AG04450 (cell line): ENCODE measurements at regions of chr19 and their contacts with region 1.

Region 1: GRCh38 chr19:43446746-43447489 is 18.5 kb downstream of the LYPD3 start:
- DNase-seq: no peak
- H3K4me3 ChIP-seq: no peak overlapping the region
- H3K27ac ChIP-seq: no peak overlapping the region
- H3K27me3 ChIP-seq: no peaks in the 10 kb centered on the region
- CTCF ChIP-seq: peak; percentile 95

Region 2: DNA sequence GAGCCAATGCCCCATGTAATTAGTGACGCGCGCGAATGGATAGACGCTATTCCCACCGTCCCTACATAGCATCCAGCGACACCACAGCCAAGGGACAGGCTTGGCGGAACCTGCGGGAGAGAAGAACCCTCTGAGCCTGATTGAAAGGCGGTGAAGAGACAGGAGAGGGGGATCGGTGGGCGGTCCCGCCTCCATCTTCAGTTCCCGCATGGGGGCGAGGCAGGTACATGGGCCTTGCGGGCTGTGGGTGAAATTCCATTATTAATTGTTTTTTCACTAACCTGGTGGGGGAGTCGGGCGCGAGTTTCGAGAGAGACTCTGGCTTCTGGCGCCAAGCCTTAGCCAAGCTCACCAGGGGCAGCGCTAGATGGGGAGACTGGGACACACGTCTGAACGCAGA is 40.6 kb before region 1 on chr19:
- CTCF ChIA-PET with region 1: no interaction called
- POLR2A ChIA-PET with region 1: no interaction called
- DNase-seq: no peak
- H3K4me3 ChIP-seq: no peak overlapping the region
- H3K27ac ChIP-seq: no peak overlapping the region
- H3K27me3 ChIP-seq: peaks cover 9% of the 10 kb centered on the region
- CTCF ChIP-seq: no peak

Region 3: DNA sequence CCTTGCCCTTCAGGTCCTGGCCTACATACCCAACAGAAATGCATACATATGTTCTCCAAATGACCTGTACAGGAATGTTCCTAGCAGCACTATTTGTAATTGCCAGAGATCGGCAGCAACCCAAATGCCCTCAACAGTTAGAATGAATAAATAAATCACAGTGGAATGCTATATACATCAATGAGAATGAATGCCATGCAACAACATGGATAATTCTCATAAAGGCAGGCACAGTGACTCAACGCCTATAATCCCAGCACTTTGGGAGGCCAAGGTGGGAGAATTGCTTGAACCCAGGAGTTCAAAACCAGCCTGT is 13.6 kb before region 1 on chr19:
- CTCF ChIA-PET with region 1: interaction called, 18 read pairs
- POLR2A ChIA-PET with region 1: no interaction called
- DNase-seq: no peak
- H3K4me3 ChIP-seq: no peak overlapping the region
- H3K27ac ChIP-seq: no peak overlapping the region
- H3K27me3 ChIP-seq: no peaks in the 10 kb centered on the region
- CTCF ChIP-seq: no peak

Region 4: GRCh38 chr19:43463381-43464136 is 16.6 kb after region 1 on chr19:
- CTCF ChIA-PET with region 1: interaction called, 23 read pairs
- POLR2A ChIA-PET with region 1: no interaction called
- DNase-seq: peak; percentile 62
- H3K4me3 ChIP-seq: peak overlapping the region; percentile 79
- H3K27ac ChIP-seq: peak overlapping the region; percentile 47
- H3K27me3 ChIP-seq: peaks cover 7% of the 10 kb centered on the region
- CTCF ChIP-seq: no peak

Region 5: DNA sequence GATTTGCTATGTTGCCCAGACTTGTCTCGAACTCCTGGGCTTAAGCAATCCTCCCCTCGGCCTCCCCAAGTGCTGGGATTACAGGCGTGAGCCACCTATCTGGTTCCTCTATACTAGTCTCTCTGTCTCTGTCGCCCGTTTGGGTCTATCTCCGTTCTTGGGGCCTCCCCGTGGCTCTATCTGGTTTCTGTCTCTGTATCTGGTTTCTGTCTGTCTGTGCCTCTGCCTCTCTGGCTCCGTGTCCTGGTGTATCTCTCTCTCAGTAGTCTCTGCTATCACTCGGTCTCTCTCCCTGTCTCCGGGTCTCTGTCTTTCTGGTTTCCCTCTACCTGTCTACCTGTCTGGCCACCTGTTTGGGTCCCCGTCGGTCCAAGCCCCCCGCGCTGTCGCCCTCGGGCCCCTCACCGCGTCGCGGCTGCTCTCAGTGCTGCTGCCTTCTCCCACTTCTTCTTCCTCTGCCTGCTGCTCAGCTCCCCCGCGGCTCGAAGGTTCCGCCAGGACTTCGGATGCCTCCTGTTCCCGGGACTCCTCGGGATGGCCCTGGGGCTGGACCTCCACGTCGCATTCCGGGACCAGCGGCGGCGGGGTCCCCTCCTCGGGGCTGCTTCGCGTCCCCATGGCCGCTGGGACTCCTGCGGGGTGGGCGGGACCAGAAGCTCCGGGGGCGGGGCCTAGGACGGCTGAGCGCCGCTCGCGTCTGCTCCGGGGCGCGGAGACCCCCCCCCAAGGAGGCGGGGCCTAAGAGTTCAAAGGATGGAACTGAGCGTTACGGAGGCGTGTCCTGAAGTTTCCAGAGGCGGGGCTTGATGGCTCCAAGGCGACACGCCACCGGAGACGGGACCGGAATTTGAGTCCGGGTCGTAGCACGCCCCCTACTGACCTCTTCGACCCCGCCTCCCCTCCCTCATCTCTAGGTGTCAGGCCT is 56.8 kb after region 1 on chr19:
- CTCF ChIA-PET with region 1: interaction called, 15 read pairs
- POLR2A ChIA-PET with region 1: interaction called, 3 read pairs
- DNase-seq: peak; percentile 68
- H3K4me3 ChIP-seq: peak overlapping the region; percentile 91
- H3K27ac ChIP-seq: peak overlapping the region; percentile 68
- H3K27me3 ChIP-seq: no peaks in the 10 kb centered on the region
- CTCF ChIP-seq: no peak

Region 6: GRCh38 chr19:43519436-43520088 is 72.6 kb after region 1 on chr19:
- CTCF ChIA-PET with region 1: interaction called, 385 read pairs
- POLR2A ChIA-PET with region 1: interaction called, 13 read pairs
- DNase-seq: peak; percentile 94
- H3K4me3 ChIP-seq: no peak overlapping the region
- H3K27ac ChIP-seq: no peak overlapping the region
- H3K27me3 ChIP-seq: no peaks in the 10 kb centered on the region
- CTCF ChIP-seq: peak; percentile 89

Region 7: DNA sequence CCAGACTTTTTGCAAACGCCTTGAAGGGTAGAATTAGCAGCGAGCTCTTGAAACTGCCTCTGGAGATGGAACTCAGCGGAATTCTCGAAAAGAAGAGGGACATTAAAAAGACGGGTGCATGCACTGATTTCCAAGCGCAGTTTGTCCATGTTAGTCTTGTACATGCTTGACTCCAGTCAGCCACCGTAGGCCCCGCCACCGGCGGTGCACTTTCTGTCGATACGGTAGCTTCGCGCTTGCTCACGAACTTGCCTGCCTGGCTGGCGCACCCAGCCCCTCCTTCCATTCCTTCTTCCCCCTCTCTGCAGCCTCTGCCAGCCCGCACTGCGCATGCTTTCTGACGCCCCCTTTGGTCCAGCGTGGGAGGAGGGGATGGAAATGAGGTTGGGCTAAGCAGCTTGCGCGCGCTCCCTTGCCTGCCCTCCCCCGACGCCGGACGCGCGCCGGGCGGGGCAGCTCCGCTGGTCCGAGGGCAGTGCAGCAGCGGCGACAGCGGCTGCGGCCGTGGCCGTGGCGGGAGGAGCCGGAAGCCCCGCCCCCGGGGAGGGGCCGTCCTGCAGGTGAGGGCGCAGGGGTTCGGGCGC is 86.1 kb after region 1 on chr19 and contains the start of gene ZNF575:
- CTCF ChIA-PET with region 1: interaction called, 17 read pairs
- POLR2A ChIA-PET with region 1: no interaction called
- DNase-seq: peak; percentile 93
- H3K4me3 ChIP-seq: peak within 1 kb of the TSS; percentile 68
- H3K27ac ChIP-seq: peak within 1 kb of the TSS; percentile 91
- H3K27me3 ChIP-seq: no peaks in the 10 kb centered on the region
- CTCF ChIP-seq: no peak
- polyA plus RNA-seq, gene ZNF575: 0.16 and 0.17 TPM in 2 replicates

Region 8: DNA sequence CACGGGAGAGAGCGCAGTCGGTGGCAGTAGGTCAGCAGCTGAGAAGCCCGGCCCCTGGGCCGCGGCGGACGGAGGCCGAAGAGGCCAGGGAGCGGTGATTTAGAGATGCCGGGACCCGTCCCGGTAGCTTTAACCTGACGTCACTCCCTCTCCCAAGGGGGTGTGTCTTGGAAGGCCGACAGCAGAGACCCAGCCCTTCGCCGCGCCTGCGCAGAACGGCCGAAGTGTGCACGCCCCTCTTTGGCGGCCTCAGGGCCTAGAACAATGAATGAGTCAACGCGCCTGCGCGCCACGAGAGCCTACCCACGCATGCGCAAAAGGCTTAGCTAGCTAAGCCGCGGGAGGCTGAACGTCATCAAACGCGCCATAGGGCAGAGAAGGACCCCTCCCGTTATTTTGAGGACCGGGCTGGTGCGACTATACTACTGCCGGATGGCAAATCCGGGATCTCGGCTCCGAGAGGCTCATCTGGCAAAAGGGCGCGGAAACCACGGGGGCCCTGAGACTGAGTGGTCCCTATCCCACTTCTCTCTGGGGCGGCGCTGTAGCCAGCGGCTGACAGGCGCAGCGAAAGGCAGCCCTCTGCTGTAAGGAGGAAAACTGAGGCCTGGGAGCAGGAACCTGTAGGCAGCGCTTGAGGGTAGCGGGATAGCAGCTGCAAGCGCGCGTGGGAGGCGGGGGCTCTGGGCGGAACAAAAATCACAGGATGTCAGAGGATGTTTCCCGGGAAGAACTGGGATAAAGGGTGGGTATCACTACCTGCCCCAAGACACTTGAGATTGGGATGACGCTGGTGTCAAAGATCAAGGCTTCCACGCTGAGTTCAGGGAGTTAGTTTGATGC is 149.3 kb after region 1 on chr19 and contains the starts of genes IRGQ and ZNF576:
- CTCF ChIA-PET with region 1: interaction called, 19 read pairs
- POLR2A ChIA-PET with region 1: no interaction called
- DNase-seq: peak; percentile 99
- H3K4me3 ChIP-seq: peak within 1 kb of the TSS; percentile 79
- H3K27ac ChIP-seq: peak within 1 kb of the TSS; percentile 99
- H3K27me3 ChIP-seq: no peaks in the 10 kb centered on the region
- CTCF ChIP-seq: 0 out of 2 replicates have a peak, but pooled peaks have one; percentile 6
- polyA plus RNA-seq, gene IRGQ: 11.2 and 11.6 TPM in 2 replicates
- polyA plus RNA-seq, gene ZNF576: 9.3 and 11.3 TPM in 2 replicates

Region 9: GRCh38 chr19:43687660-43687997 is 240.7 kb after region 1 on chr19:
- CTCF ChIA-PET with region 1: no interaction called
- POLR2A ChIA-PET with region 1: no interaction called
- DNase-seq: no peak
- H3K4me3 ChIP-seq: no peak overlapping the region
- H3K27ac ChIP-seq: no peak overlapping the region
- H3K27me3 ChIP-seq: peaks cover 3% of the 10 kb centered on the region
- CTCF ChIP-seq: no peak